ENCODE measurements at regions of chr17 and their contacts with region 1.

Region 1: GRCh38 chr17:27879987-27880608 is 13.1 kb downstream of the LYRM9 start:
- DNase-seq: peak; percentile 83
- CTCF ChIP-seq: peak; percentile 94

Region 2: GRCh38 chr17:27760069-27760885 is 119.8 kb before region 1 on chr17:
- in situ Hi-C with region 1: loop called (anchors 10 kb)
- DNase-seq: peak; percentile 69
- CTCF ChIP-seq: peak; percentile 86

Region 3: GRCh38 chr17:27800522-27800921 is 79.6 kb before region 1 on chr17 and contains the start of gene NOS2:
- in situ Hi-C with region 1: loop called (anchors 5 kb)
- DNase-seq: no peak
- CTCF ChIP-seq: no peak

Measured in GM13977 (cell line).